Lower leg skin (tissue), 4 donors: ENCODE measurements at regions of chr13 and their contacts with region 1.

Region 1: GRCh38 chr13:35649162-35649561 is 172.7 kb upstream of the MAB21L1 start:
- DNase-seq: no peak
- H3K4me3 ChIP-seq: no peak overlapping the region
- CTCF ChIP-seq: no peak
- POLR2A ChIP-seq: no peak

Region 2: GRCh38 chr13:35669321-35669720 is 20.2 kb after region 1 on chr13:
- intact Hi-C with region 1: loop called (anchors 1 kb)
- DNase-seq: no peak
- H3K4me3 ChIP-seq: no peak overlapping the region
- CTCF ChIP-seq: no peak
- POLR2A ChIP-seq: no peak